Activated T-helper 1 cell treated with anti-CD3 and anti-CD28 coated beads, Interleukin-12 subunit alpha, Interleukin-12 subunit beta, Interleukin-2, Interleukin-4 antibody, amounts not matched to agents 30 ng/mL and 10 ng/mL and 1 ng/mL, durations not matched to agents 14 hours and 24 hours and 36 hours (primary cell): ENCODE measurements at regions of chr1 and their contacts with region 1.

Region 1: DNA sequence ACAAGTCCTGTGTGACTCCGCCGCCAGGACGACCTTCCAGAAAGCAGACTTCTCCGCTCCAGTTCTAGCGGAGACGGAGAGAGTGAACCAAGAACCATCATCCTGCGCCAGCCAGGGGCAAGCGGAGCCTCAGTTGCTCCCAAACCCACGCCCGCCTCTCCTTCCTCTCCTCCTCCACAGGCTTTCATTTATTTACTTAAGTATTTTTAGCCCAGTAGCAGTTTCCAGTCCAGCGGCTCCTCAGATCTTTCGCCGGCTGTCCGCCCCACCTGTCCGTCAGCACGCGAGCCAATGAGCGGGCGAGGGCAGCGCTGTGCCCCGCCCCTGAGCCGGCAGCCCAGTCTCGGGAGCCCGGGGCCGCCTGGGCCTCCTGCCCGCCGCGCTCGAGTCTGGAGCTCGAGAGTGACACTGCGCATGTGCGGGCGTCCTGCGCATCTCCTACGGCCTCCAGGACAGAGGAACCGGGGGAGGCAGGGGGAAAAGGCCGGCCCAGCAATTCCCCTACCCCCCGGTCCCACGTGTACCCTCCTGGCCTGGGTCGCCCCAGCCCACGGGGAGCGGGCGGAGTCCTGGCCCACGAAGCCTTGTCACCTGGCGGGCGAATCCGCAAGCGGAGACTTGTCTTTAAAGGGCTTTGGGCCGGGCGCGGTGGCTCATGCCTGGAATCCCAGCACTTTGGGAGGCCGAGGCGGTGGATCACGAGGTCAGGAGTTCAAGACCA is at the start of gene FALEC:
- DNase-seq: peak; percentile 93
- H3K4me3 Mint-ChIP-seq: peak within 1 kb of the TSS; percentile 79
- H3K27ac Mint-ChIP-seq: peak within 1 kb of the TSS; percentile 83
- H3K4me1 Mint-ChIP-seq: peaks cover 16% of the 10 kb centered on the region
- H3K27me3 Mint-ChIP-seq: no peaks in the 10 kb centered on the region
- total RNA-seq, gene FALEC: not detected in 2 replicates

Region 2: DNA sequence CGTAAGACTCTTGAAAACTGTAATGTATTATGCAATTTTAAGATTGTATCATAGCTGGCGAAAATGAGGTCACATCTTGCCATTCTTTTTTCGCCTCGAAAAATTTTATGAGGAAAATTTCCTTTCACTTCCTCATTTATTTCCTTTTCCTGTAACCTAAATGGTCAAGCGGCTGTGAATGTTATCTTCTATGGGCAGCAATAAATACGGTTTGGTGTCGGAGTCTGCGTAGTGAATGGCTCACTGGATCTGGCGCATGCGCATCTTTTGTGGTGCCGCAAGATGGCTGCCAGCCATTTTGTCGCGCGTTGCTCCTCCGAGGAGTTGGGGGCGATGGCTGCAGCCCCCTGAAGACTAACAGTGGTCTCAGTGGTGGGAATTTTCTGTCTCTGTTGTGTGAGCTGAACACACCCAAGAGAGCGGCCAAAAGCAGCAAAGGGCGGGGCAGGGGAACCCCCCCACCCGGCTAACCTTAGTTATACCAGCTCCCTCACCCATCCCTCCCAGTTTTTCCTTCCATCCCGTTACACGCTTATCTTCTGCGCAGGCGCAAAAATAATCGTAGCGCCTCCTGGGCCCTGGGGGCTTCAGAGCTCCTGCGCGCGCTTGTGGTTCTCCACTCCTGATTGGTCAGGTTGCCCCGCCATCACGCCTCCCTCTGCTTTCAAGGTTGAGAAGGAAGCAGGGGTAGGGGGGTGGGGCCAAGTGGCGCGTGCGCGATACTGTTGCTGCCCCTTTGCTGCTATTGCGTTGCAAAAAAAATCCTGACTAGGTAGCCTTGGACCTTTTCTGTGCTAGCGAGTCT is 151.9 kb before region 1 on chr1 and contains the start of gene RPRD2:
- intact Hi-C with region 1: loop called (anchors 1 kb)
- DNase-seq: peak; percentile 99
- H3K4me3 Mint-ChIP-seq: peak within 1 kb of the TSS; percentile 99
- H3K27ac Mint-ChIP-seq: peak within 1 kb of the TSS; percentile 97
- H3K4me1 Mint-ChIP-seq: peaks cover 41% of the 10 kb centered on the region
- H3K27me3 Mint-ChIP-seq: no peaks in the 10 kb centered on the region
- total RNA-seq, gene RPRD2: 24.4 and 24.7 TPM in 2 replicates

Region 3: GRCh38 chr1:150464422-150464826 is 51.1 kb before region 1 on chr1:
- intact Hi-C with region 1: loop called (anchors 1 kb)
- DNase-seq: peak; percentile 50
- H3K4me3 Mint-ChIP-seq: no peak overlapping the region
- H3K27ac Mint-ChIP-seq: peak overlapping the region; percentile 63
- H3K4me1 Mint-ChIP-seq: peaks cover 5% of the 10 kb centered on the region
- H3K27me3 Mint-ChIP-seq: no peaks in the 10 kb centered on the region

Region 4: GRCh38 chr1:150548632-150549495 is 33.4 kb after region 1 on chr1 and contains the start of gene ADAMTSL4:
- intact Hi-C with region 1: loop called (anchors 2 kb)
- DNase-seq: no peak
- H3K4me3 Mint-ChIP-seq: peak within 1 kb of the TSS; percentile 86
- H3K27ac Mint-ChIP-seq: peak within 1 kb of the TSS; percentile 74
- H3K4me1 Mint-ChIP-seq: peaks cover 34% of the 10 kb centered on the region
- H3K27me3 Mint-ChIP-seq: peaks cover 22% of the 10 kb centered on the region
- total RNA-seq, gene ADAMTSL4: 1.2 and 1.3 TPM in 2 replicates